ENCODE measurements at regions of chr5 and their contacts with region 1.

Region 1: DNA sequence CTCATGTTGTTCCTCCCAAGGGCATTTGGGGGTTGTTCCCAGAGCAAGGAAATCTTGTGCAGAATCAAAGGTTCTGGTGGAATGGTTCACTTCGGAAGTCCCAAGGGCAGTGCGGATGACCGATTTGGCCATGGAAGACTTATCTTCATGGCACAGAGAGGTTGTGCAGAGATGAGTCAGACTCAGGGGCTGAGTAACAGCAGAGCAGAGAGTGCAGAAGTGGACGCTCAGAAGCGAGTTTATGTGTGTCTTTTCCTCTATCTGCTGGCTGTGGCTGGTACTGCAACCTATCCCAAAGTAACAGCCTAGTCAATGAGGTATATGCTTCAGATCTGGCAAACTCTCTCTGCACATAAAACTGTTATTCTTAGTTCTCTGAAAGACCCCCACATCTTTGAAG is 118.1 kb downstream of the DPYSL3 start:
- DNase-seq: peak in 2 of 4 experiments; percentile 13 to 24
- ATAC-seq: peak; percentile 54; the same call in 2 of the 3 replicates
- H3K4me3 ChIP-seq: no peak overlapping the region
- H3K27ac ChIP-seq: no peak overlapping the region
- H3K4me1 ChIP-seq: no peaks in the 10 kb centered on the region
- H3K27me3 ChIP-seq: no peaks in the 10 kb centered on the region
- CTCF ChIP-seq: 0 out of 6 replicates have a peak, but pooled peaks of 2 of the 3 experiments have one; percentile 6 to 9
- EP300 ChIP-seq: no peak
- POLR2A ChIP-seq: no peak
- RAD21 ChIP-seq: peak in 1 of 2 experiments; percentile 44; a peak in 2 of 4 replicates

Region 2: DNA sequence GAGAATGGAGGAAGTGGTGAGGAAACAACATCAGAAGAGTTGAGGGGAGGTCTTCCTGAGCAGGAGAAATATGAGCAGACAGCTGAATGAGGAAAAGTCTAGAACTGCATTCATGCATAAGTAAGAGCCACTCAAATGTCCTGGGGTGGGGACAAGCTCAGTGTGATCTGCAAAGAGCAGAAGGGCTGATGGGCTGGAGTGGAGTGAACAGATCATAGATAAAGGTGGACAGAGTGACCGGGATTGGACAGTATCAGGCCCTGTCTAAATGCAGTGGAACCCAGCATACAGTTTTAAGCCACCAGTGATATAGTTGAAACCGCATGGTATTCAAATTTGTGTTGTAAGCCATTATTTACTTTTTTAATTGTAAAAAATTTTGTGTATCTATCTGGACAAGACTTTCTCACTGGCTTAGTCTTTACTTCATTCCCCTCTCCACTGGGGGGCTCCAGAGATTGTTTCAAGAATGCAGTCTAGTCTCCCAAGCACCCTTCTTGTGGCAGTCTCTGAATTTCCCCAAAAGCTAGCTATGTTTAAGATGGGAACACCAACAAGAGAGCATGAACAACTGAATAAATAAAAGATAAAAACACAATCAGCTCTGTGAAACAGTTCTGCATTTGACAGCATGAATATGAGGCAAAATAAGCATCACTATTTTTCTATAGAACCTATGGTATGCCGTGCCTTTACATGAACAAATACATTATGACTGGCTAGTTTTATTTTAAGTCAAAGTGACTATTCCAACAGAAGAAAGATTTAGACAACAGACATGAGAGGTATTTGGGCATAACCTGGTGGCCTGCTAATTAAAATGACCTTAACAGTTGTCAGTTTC is 167.6 kb before region 1 on chr5:
- CTCF ChIA-PET with region 1: no interaction called
- POLR2A ChIA-PET with region 1: no interaction called
- in situ Hi-C with region 1: no loop called
- intact Hi-C with region 1: loop called (anchors 10 kb)
- DNase-seq: peak in 3 of 4 experiments; percentile 7 to 13 (median 12)
- ATAC-seq: no peak
- H3K4me3 ChIP-seq: no peak overlapping the region
- H3K27ac ChIP-seq: no peak overlapping the region
- H3K4me1 ChIP-seq: no peaks in the 10 kb centered on the region
- H3K27me3 ChIP-seq: no peaks in the 10 kb centered on the region
- CTCF ChIP-seq: no peak
- EP300 ChIP-seq: no peak
- POLR2A ChIP-seq: no peak
- RAD21 ChIP-seq: peak in 1 of 2 experiments; percentile 39; a peak in 3 of 4 replicates

Region 3: GRCh38 chr5:147339313-147339712 is 52.5 kb before region 1 on chr5:
- CTCF ChIA-PET with region 1: no interaction called
- POLR2A ChIA-PET with region 1: no interaction called
- in situ Hi-C with region 1: no loop called
- intact Hi-C with region 1: no loop called
- DNase-seq: no peak
- ATAC-seq: no peak
- H3K4me3 ChIP-seq: no peak overlapping the region
- H3K27ac ChIP-seq: no peak overlapping the region
- H3K4me1 ChIP-seq: no peaks in the 10 kb centered on the region
- H3K27me3 ChIP-seq: no peaks in the 10 kb centered on the region
- CTCF ChIP-seq: no peak
- EP300 ChIP-seq: no peak
- POLR2A ChIP-seq: no peak
- RAD21 ChIP-seq: no peak

Region 4: DNA sequence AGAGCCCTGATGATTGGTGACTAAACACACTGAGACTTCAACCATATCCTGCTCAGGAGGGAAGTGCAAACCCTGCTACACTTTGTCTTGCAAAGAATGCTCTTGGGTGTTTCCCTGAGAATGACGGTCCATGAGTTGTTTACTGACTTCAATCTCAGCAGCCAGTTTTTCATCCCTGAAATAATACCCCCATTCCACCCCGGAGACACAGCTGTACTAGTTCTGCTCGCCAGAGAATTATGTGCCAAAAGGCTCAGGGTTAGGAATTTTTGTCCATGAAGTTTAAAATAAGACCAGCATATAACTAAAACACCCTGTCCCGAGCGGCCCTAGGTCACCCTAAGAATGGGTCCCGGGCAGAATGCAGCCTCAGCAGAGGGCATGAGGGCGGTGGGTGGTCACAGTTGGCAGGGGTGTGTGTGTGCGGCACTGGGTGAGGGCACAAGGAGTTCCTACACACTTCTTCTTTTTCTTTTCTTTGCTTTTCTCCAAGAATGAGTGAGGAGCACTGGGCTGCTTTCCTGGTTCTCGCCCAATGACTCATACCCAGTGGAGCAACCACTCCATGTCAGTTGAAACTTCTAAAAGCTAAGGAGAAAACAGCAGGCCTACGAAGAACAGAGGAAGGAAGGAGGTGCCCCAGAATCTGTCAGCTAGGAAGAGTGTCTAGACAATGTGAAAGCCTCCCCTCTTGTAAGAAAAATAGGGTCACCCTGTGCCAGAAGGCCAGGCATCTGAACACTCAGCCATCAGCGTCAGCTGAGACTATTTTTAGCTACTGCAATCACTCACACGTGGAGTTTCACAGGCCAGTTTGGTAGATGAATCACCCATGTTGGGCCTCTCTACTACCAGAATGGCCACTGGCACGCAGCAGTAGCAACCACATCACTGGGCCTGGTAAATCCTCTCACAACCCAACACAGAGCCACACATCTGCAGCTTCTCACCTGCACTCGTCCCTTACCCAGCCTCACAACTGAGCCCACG is 12.2 kb after region 1 on chr5:
- CTCF ChIA-PET with region 1: no interaction called
- POLR2A ChIA-PET with region 1: no interaction called
- in situ Hi-C with region 1: no loop called
- intact Hi-C with region 1: no loop called
- DNase-seq: no peak
- ATAC-seq: no peak
- H3K4me3 ChIP-seq: no peak overlapping the region
- H3K27ac ChIP-seq: no peak overlapping the region
- H3K4me1 ChIP-seq: no peaks in the 10 kb centered on the region
- H3K27me3 ChIP-seq: no peaks in the 10 kb centered on the region
- CTCF ChIP-seq: no peak
- EP300 ChIP-seq: no peak
- POLR2A ChIP-seq: no peak
- RAD21 ChIP-seq: no peak

Measured in K562 (cell line).